Activated CD4-positive, alpha-beta T cell treated with anti-CD3 and anti-CD28 coated beads for 36 hours (primary cell): ENCODE measurements at regions of chr1 and their contacts with region 1.

Region 1: DNA sequence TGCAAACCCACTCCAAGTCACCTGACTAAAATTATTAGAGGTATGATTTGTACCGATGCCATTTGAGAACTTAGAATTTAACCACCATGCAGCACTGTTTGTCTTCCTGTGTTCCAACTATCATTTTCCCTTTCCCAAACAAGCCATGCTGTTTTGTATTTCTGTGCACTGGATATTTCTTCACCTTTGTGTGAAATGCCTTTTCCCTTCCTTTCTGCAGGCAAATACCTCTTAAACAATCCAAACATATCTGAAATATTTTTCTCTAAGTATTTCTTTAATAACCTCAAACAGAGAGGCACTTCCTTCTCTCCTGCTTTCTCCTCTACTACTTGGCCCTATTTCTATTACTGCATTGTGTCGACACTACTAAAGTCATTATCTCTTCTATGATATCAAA is 114.5 kb upstream of the USH2A start:
- DNase-seq: no peak
- ATAC-seq: no peak
- H3K4me3 Mint-ChIP-seq: no peak overlapping the region
- H3K27ac Mint-ChIP-seq: no peak overlapping the region
- H3K4me1 Mint-ChIP-seq: no peaks in the 10 kb centered on the region
- H3K27me3 Mint-ChIP-seq: no peaks in the 10 kb centered on the region

Region 2: GRCh38 chr1:216499590-216500272 is 38.1 kb before region 1 on chr1:
- CTCF ChIA-PET with region 1: interaction called, 3 read pairs
- POLR2A ChIA-PET with region 1: no interaction called
- intact Hi-C with region 1: loop called in 1 of 2 experiments (anchors 1 kb)
- DNase-seq: no peak
- ATAC-seq: no peak
- H3K4me3 Mint-ChIP-seq: no peak overlapping the region
- H3K27ac Mint-ChIP-seq: no peak overlapping the region
- H3K4me1 Mint-ChIP-seq: no peaks in the 10 kb centered on the region
- H3K27me3 Mint-ChIP-seq: no peaks in the 10 kb centered on the region

Region 3: GRCh38 chr1:216553040-216553439 is 15.2 kb after region 1 on chr1:
- CTCF ChIA-PET with region 1: no interaction called
- POLR2A ChIA-PET with region 1: no interaction called
- intact Hi-C with region 1: loop called in 1 of 2 experiments (anchors 1 kb)
- DNase-seq: no peak
- ATAC-seq: no peak
- H3K4me3 Mint-ChIP-seq: no peak overlapping the region
- H3K27ac Mint-ChIP-seq: no peak overlapping the region
- H3K4me1 Mint-ChIP-seq: no peaks in the 10 kb centered on the region
- H3K27me3 Mint-ChIP-seq: no peaks in the 10 kb centered on the region

Region 4: GRCh38 chr1:216587715-216588114 is 49.9 kb after region 1 on chr1:
- CTCF ChIA-PET with region 1: no interaction called
- POLR2A ChIA-PET with region 1: no interaction called
- intact Hi-C with region 1: no loop called
- DNase-seq: no peak
- ATAC-seq: no peak
- H3K4me3 Mint-ChIP-seq: no peak overlapping the region
- H3K27ac Mint-ChIP-seq: no peak overlapping the region
- H3K4me1 Mint-ChIP-seq: no peaks in the 10 kb centered on the region
- H3K27me3 Mint-ChIP-seq: no peaks in the 10 kb centered on the region